Activated T-helper 1 cell treated with anti-CD3 and anti-CD28 coated beads, Interleukin-12 subunit alpha, Interleukin-12 subunit beta, Interleukin-2, Interleukin-4 antibody, amounts not matched to agents 30 ng/mL and 10 ng/mL and 1 ng/mL, durations not matched to agents 14 hours and 24 hours and 36 hours (primary cell): ENCODE measurements at regions of chr14 and their contacts with region 1.

Region 1: DNA sequence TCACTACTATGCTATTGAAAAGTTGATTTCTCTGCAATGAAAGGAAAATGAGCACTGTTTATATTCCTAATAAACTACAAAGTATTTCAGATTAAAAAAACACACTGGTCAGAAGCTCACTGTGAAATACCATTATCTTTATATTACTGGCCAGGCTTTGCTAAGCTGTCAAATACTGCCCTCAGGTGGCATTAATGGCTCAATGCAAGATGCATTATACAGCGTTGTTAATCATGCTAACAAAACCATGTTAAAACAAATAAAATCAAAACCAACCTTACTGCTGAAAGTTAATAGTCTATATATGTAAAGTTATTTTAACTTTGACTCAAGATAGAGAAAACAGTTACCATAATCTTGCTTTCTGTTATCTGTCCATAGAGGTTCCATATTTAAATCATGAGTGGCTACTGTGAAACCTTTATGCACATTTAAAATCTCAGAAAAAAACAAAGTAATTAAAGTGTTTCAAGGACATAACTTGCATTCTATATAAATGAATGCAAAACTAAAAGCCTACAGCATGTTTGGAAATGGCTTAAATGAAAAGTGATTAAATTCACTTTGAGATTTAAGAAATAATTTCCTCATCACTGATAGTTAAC is 121.7 kb downstream of the RALGAPA1 start:
- DNase-seq: no peak
- H3K4me3 Mint-ChIP-seq: no peak overlapping the region
- H3K27ac Mint-ChIP-seq: no peak overlapping the region
- H3K4me1 Mint-ChIP-seq: peaks cover 25% of the 10 kb centered on the region
- H3K27me3 Mint-ChIP-seq: no peaks in the 10 kb centered on the region

Region 2: GRCh38 chr14:35215110-35215876 is 472.1 kb before region 1 on chr14:
- intact Hi-C with region 1: loop called (anchors 1 kb)
- DNase-seq: no peak
- H3K4me3 Mint-ChIP-seq: no peak overlapping the region
- H3K27ac Mint-ChIP-seq: no peak overlapping the region
- H3K4me1 Mint-ChIP-seq: peaks cover 39% of the 10 kb centered on the region
- H3K27me3 Mint-ChIP-seq: no peaks in the 10 kb centered on the region

Region 3: GRCh38 chr14:35438910-35439713 is 248.3 kb before region 1 on chr14:
- intact Hi-C with region 1: loop called (anchors 1 kb)
- DNase-seq: no peak
- H3K4me3 Mint-ChIP-seq: no peak overlapping the region
- H3K27ac Mint-ChIP-seq: no peak overlapping the region
- H3K4me1 Mint-ChIP-seq: peaks cover 7% of the 10 kb centered on the region
- H3K27me3 Mint-ChIP-seq: no peaks in the 10 kb centered on the region

Region 4: DNA sequence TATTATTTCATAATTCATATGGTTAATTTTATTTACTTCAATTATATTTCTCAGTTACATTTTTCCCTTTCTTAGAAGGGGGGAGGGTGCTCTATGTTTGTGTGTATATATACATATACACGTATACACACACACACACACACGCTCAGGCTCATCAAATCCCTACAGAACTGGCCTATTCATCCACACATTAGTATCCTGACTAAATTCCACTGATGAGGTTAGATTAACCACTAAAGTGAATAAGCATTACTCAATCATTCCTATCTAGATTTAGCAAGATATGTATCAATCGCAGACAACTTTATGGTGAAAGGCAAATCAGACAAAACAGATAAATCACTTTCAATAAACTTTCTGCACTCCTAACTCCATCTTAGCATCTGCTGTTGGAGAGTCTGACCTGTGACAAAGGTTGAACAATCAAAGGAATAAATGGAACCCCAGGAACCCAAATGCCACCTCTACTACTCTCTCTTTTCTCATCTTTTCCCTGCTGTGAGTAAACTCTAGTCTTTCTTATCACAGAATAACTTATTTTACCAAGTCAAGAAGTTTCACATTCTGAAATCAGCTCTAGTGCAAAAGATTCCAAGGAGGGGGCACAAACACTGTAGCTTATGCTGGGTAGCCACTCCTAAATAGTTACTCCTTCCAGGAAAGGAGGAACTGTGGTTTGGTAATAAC is 54.1 kb after region 1 on chr14:
- intact Hi-C with region 1: loop called (anchors 1 kb)
- DNase-seq: no peak
- H3K4me3 Mint-ChIP-seq: no peak overlapping the region
- H3K27ac Mint-ChIP-seq: peak overlapping the region; percentile 47
- H3K4me1 Mint-ChIP-seq: peaks cover 23% of the 10 kb centered on the region
- H3K27me3 Mint-ChIP-seq: no peaks in the 10 kb centered on the region